Ascending aorta (tissue), 2 donors: ENCODE measurements at regions of chr3 and their contacts with region 1.

Region 1: GRCh38 chr3:59575113-59576001 is 525.5 kb upstream of the CFAP20DC start:
- DNase-seq: peak; percentile 17 to 85
- H3K4me3 ChIP-seq: no peak overlapping the region
- H3K27ac ChIP-seq: no peak overlapping the region
- H3K4me1 ChIP-seq: no peaks in the 10 kb centered on the region
- H3K27me3 ChIP-seq: no peaks in the 10 kb centered on the region
- CTCF ChIP-seq: peak; percentile 77 to 94 (median 88)

Region 2: DNA sequence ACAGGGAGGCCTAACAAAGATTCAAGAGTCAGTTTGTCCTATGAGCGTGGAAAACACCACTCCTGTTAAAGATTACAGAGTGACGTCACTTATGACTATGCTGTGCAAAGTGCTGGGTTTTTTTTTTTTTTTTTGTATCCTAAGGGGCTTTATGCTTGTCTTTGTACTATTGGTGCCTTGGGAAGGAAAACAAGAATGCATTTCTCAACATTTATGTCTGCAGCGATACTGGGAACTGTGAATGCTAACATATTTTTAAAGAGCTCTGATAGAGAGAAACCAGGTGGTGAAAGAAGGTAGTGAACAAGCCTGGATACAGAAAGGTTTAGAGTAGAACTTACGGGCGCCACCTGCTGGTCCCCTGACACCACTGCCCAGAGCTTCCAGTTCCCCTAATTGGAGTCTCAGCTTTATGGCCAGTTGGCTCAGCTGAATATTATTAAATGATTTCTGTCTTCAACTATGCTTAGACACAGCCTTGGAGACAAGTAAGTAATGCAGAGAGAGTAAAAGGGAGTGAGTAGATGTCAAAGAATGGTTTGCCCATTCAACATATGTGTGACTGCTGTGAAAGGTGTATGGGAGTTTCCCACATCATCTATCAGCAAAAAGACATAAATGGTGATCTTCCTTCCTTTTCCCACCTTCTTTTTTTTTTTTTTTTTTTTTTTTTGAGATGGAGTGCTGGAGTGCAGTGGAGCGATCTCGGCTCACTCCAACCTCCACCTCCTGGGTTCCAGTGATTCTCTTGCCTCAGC is 282.4 kb after region 1 on chr3:
- intact Hi-C with region 1: loop called (anchors 1 kb)
- DNase-seq: peak in 1 of 2 donors; percentile 75
- H3K4me3 ChIP-seq: no peak overlapping the region
- H3K27ac ChIP-seq: no peak overlapping the region
- H3K4me1 ChIP-seq: no peaks in the 10 kb centered on the region
- H3K27me3 ChIP-seq: no peaks in the 10 kb centered on the region
- CTCF ChIP-seq: peak; percentile 63 to 76 (median 75)